Activated CD4-positive, alpha-beta T cell treated with anti-CD3 and anti-CD28 coated beads for 36 hours (primary cell): ENCODE measurements at regions of chr11 and their contacts with region 1.

Region 1: DNA sequence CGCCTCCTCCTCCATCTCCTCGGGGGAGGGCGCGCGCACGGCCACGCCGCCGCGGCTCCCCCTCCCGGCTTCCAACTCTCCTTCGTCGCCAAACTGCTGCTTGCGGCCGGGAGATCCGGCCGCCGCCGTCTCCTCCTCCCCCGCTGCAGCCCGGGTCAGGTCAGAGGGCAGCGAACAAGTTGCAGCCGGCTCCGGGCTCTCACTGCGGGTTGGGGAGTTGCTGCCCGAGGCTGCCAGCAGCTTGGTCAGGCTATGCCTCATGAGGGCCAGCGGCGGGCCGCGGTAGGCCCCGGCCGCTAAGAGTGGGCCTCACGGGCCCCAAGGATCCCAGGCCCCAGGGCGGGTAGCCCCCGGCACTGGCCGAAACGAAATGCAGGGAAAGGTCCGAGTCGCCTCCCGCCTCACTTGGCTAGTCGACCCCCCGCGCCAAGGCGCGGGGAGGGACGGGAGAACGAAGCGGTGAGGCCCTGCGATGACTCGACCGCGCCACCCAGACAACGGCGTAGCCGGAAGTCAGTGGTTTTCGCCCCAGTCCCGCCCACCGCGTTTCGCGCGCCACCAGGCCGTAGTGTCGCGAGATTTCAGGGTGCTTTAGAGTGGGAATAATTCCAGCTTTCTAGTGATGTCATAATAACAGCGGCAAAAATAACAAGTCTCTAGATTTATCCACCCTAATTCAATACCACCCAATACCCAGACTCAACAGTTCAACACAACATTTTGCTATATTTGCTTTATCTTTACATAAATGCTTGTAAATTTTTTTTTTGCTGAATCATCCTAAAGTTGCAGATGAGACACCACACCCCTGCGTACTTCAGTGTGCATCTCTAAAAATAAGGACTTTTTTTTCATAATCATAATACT is at the start of gene CREBZF:
- DNase-seq: peak; percentile 97
- ATAC-seq: peak; percentile 88
- H3K4me3 Mint-ChIP-seq: peak within 1 kb of the TSS; percentile 100
- H3K27ac Mint-ChIP-seq: peak within 1 kb of the TSS; percentile 99
- H3K4me1 Mint-ChIP-seq: peaks cover 29% of the 10 kb centered on the region
- H3K27me3 Mint-ChIP-seq: no peaks in the 10 kb centered on the region
- total RNA-seq, gene CREBZF: 30.4 to 35.9 TPM

Region 2: DNA sequence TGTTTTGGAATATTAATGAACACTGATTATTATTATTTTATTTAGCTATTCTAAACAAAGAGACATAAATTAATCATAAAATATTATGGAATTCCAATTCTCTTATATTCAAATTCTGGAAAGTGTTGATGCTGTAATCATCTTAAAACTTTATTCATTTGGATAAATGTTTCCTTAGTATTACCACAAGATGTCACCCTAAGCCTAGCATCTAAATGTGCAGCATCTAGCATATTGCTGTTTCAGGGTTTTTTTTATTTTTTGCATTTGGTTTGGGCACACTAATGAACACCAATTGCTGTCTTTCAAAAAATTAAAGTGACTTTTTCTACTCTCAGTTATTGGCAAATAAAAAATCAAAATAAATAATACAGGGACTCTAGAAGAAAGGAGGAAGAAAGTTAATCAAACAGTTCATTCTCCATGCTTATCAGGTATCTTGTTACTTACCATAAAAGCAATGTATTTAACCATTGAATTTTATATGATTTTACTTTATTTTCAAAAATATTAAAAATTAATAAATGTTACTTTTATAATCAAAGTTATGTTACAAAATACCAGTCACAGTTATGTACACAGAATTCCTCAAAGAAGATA is 69.5 kb before region 1 on chr11:
- CTCF ChIA-PET with region 1: no interaction called
- POLR2A ChIA-PET with region 1: no interaction called
- intact Hi-C with region 1: loop called (anchors 1 to 5 kb)
- DNase-seq: no peak
- ATAC-seq: peak; percentile 64
- H3K4me3 Mint-ChIP-seq: no peak overlapping the region
- H3K27ac Mint-ChIP-seq: no peak overlapping the region
- H3K4me1 Mint-ChIP-seq: no peaks in the 10 kb centered on the region
- H3K27me3 Mint-ChIP-seq: peaks cover 2% of the 10 kb centered on the region

Region 3: GRCh38 chr11:85647604-85648299 is 17.1 kb before region 1 on chr11 and contains the start of gene TMEM126A:
- CTCF ChIA-PET with region 1: interaction called, 4 read pairs
- POLR2A ChIA-PET with region 1: interaction called, 3 read pairs
- intact Hi-C with region 1: loop called (anchors 1 kb)
- DNase-seq: peak; percentile 96
- ATAC-seq: peak; percentile 97
- H3K4me3 Mint-ChIP-seq: peak within 1 kb of the TSS; percentile 99
- H3K27ac Mint-ChIP-seq: peak within 1 kb of the TSS; percentile 96
- H3K4me1 Mint-ChIP-seq: peaks cover 22% of the 10 kb centered on the region
- H3K27me3 Mint-ChIP-seq: peaks cover 12% of the 10 kb centered on the region
- total RNA-seq, gene TMEM126A: 21.7 to 37.4 TPM

Region 4: DNA sequence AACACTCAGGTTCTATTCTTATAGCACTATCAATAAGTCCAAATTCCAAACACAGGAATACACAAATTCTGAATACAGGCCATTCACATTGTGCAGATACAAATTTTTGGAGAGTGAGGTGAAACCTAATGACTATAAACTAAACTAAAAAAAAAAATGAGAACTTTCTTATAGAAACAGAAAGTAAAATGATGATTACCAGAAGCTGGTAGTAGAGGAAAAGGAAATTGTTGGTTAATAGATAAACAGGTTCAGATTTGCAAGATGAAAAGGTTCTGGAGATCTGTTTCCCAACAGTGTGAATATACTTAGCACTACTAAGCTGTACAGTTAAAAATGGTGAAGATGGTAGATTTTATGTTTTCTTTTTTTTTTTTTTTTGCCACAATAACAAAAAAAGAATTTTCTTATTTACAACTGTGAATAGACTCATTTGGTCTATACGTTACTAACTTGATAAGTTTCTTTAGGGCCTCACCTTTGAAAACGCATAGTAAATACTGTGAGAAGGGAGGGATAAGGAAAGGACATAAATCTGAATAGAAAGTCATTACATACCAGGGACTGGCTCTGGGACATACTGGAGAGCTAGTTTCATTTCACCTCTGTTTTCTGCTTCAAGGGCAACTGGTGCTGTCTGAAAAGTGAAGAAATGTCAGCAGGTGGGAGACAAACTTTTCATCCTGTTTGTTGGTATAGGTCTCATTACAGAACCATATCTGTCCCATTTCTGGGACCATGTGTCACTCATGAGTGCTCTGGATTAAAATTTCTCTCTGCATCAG is 35.3 kb after region 1 on chr11:
- CTCF ChIA-PET with region 1: no interaction called
- POLR2A ChIA-PET with region 1: no interaction called
- intact Hi-C with region 1: loop called in 1 of 2 experiments (anchors 2 kb)
- DNase-seq: no peak
- ATAC-seq: peak; percentile 49
- H3K4me3 Mint-ChIP-seq: peak overlapping the region; percentile 31
- H3K27ac Mint-ChIP-seq: peak overlapping the region; percentile 87
- H3K4me1 Mint-ChIP-seq: peaks cover 33% of the 10 kb centered on the region
- H3K27me3 Mint-ChIP-seq: no peaks in the 10 kb centered on the region

Region 5: DNA sequence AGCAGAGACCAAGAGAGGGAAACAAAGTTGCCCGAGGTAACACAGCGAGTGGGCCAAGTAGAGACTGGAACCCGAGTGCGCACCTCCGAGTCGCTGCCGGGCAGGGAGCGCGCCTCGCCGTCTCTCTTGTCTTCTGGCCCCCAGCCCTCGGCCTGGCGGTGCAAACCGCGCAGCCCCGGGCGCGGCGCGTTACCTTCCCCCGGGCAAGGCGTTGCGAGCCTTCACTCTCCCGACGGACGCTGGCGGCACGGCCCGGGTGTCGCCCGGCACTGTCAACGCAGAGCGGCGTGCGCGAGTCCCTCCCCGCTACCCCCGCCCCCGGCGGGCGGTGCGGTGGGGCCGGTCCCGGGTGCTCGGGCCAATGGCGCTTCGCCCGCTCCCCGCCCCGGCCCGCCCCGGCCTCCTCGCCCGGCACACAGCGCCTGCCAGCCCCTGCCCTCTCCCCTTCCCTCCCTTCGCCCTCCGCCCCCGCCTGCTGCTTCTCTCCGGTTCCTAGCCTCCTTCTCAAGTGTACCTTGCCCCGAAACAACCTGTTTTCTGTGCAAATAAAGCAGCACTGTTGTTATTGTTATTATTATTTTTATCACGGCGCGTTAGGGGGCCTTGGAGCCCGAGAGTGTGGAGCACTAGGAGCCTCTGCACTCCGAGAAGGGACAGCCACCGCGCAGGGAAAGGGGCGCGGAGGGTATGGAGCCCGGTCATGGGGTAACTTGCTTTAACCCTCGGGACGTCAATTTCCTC is 146.2 kb after region 1 on chr11 and contains the start of gene SYTL2:
- CTCF ChIA-PET with region 1: interaction called, 5 read pairs
- POLR2A ChIA-PET with region 1: interaction called, 3 read pairs
- intact Hi-C with region 1: loop called in 1 of 2 experiments (anchors 1 kb)
- DNase-seq: peak; percentile 84
- ATAC-seq: peak; percentile 95
- H3K4me3 Mint-ChIP-seq: peak within 1 kb of the TSS; percentile 73
- H3K27ac Mint-ChIP-seq: peak within 1 kb of the TSS; percentile 63
- H3K4me1 Mint-ChIP-seq: peaks cover 33% of the 10 kb centered on the region
- H3K27me3 Mint-ChIP-seq: peaks cover 8% of the 10 kb centered on the region
- total RNA-seq, gene SYTL2: 5.2 to 6.8 TPM

Region 6: DNA sequence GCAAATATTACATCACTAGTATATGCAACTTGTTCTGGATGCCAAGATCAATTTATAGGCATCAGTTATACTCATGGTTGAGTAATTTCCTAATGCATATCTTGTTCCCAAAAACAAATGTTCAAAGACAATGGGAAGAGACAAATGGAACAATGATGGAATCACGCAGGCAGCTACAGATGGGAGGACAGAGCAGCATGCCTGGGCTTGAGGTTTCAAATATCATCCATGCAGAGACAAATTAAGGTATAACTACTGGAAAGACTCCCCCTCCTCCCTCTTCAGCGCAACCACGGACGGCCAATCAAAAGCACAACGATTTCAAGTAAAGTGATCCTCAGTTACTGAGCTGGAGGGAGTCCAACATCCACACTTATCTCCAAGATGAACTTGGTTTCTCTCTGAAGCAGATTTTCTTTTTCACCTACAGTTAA is 297.1 kb after region 1 on chr11:
- CTCF ChIA-PET with region 1: no interaction called
- POLR2A ChIA-PET with region 1: no interaction called
- intact Hi-C with region 1: no loop called
- DNase-seq: no peak
- ATAC-seq: no peak
- H3K4me3 Mint-ChIP-seq: no peak overlapping the region
- H3K27ac Mint-ChIP-seq: no peak overlapping the region
- H3K4me1 Mint-ChIP-seq: peaks cover 5% of the 10 kb centered on the region
- H3K27me3 Mint-ChIP-seq: no peaks in the 10 kb centered on the region

Region 7: GRCh38 chr11:86302100-86302793 is 637.4 kb after region 1 on chr11 and contains the start of gene HIKESHI:
- CTCF ChIA-PET with region 1: no interaction called
- POLR2A ChIA-PET with region 1: no interaction called
- intact Hi-C with region 1: loop called in 1 of 2 experiments (anchors 2 kb)
- DNase-seq: peak; percentile 97
- ATAC-seq: peak; percentile 99
- H3K4me3 Mint-ChIP-seq: peak within 1 kb of the TSS; percentile 96
- H3K27ac Mint-ChIP-seq: peak within 1 kb of the TSS; percentile 99
- H3K4me1 Mint-ChIP-seq: peaks cover 31% of the 10 kb centered on the region
- H3K27me3 Mint-ChIP-seq: no peaks in the 10 kb centered on the region
- total RNA-seq, gene HIKESHI: 50.2 to 51.3 TPM